CD8-positive, alpha-beta memory T cell (primary cell): ENCODE measurements at regions of chr12 and their contacts with region 1.

Region 1: DNA sequence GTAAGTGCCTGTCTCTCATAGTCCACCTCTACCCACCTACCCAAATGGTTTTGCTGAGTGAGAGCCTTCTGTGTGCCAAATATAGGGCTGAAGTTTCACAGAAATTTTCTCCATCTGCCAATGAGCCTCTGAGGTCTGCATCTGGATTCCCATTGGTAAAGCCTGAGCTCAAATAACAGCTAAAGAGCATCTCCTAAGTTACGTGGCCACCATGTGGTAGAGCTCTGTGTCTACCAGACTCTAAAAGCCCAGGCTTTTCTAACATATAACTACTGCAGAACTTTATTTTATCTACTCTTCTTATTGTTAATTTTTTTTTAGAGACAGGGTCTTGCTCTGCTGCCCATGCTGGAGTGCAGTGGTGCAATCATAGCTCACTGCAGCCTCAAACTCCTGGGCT is 16.0 kb downstream of the AMDHD1 start:
- DNase-seq: no peak
- H3K4me3 ChIP-seq: no peak overlapping the region
- H3K4me3 Mint-ChIP-seq: no peak overlapping the region
- H3K27ac ChIP-seq: no peak overlapping the region
- H3K27ac Mint-ChIP-seq: peak overlapping the region in 1 of 8 donors; percentile 43
- H3K4me1 ChIP-seq: no peaks in the 10 kb centered on the region
- H3K4me1 Mint-ChIP-seq: no peaks in the 10 kb centered on the region
- H3K27me3 ChIP-seq: no peaks in the 10 kb centered on the region
- H3K27me3 Mint-ChIP-seq: no peaks in the 10 kb centered on the region

Region 2: GRCh38 chr12:95858479-95859343 is 100.4 kb before region 1 on chr12 and contains the start of gene SNRPF:
- CTCF ChIA-PET with region 1: no interaction called
- POLR2A ChIA-PET with region 1: no interaction called
- DNase-seq: peak; percentile 86 to 96 (median 93)
- H3K4me3 ChIP-seq: peak within 1 kb of the TSS; percentile 83
- H3K4me3 Mint-ChIP-seq: no peak within 1 kb of the TSS
- H3K27ac ChIP-seq: peak within 1 kb of the TSS; percentile 85
- H3K27ac Mint-ChIP-seq: peak within 1 kb of the TSS in 1 of 8 donors; percentile 47
- H3K4me1 ChIP-seq: peaks cover 27% of the 10 kb centered on the region
- H3K4me1 Mint-ChIP-seq: peaks cover 11 to 34% (median 19%) of the 10 kb centered on the region in 3 donors
- H3K27me3 ChIP-seq: no peaks in the 10 kb centered on the region
- H3K27me3 Mint-ChIP-seq: peaks cover 3 to 4% of the 10 kb centered on the region in 2 donors
- total RNA-seq, gene SNRPF: 45.4 to 49.2 TPM

Region 3: DNA sequence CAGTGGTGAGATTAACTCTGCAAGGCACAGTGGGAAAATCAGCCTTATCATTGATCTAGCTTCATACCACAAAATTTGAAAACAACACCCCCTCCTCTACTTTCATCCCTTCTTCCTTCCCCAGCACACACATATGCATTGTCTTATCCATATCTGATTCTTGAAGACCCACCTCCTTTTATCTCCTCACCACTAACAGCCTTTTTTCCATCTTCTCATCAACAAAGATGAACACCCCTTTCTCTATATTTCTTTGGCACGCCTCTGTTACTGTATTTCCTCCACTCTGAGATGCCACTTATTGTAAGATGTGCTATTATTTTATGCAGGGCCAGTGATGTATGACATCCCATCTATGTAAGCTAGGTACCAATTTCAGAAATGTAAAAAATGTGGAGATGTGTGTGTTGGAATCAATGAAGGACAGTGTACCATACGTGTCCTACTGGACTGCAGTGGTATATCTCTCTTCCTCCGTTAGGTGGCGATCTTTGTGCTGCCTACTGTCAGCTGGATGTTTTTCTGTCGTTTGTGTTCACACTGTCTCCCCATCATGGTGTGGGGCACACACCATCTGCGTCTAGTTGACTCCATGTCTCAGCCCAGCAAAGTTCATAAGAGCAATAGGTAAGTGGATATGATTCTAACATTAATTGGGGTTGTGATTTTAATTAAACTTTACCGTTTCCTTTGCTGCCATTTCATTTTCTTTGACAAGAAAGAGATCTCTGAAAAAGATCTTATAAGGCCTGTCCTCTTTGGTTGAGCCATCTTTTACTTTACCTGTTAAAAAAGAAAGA is 40.7 kb before region 1 on chr12:
- CTCF ChIA-PET with region 1: interaction called, 12 read pairs
- POLR2A ChIA-PET with region 1: no interaction called
- DNase-seq: peak in 4 of 5 donors; percentile 16 to 63 (median 51)
- H3K4me3 ChIP-seq: no peak overlapping the region
- H3K4me3 Mint-ChIP-seq: no peak overlapping the region
- H3K27ac ChIP-seq: no peak overlapping the region
- H3K27ac Mint-ChIP-seq: no peak overlapping the region
- H3K4me1 ChIP-seq: no peaks in the 10 kb centered on the region
- H3K4me1 Mint-ChIP-seq: no peaks in the 10 kb centered on the region
- H3K27me3 ChIP-seq: no peaks in the 10 kb centered on the region
- H3K27me3 Mint-ChIP-seq: peaks cover 3% of the 10 kb centered on the region in 2 donors